AG04449 (cell line): ENCODE measurements at regions of chr2 and their contacts with region 1.

Region 1: GRCh38 chr2:222919841-222920526 is 59.1 kb downstream of the ACSL3 start:
- DNase-seq: peak; percentile 78
- H3K4me3 ChIP-seq: no peak overlapping the region
- CTCF ChIP-seq: no peak

Region 2: DNA sequence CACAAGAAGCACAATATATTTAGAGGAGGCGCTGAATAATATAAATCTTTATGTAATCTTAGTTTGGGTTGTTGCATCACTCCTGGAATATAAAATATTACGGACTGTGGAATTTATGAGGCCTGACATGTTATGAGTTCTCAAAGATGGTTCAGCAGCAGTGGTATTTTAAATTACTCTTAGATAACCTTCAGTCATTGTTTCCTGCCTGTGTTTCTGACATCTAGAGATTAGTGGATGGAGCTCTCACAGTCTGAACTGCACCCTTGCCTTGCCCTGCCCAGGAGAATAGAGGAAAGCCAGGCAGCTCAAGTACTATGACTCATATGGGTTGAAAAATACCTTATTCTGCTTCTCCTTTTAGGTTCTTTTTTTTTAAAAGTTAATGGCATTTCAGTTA is 10.9 kb after region 1 on chr2:
- CTCF ChIA-PET with region 1: interaction called, 19 read pairs
- POLR2A ChIA-PET with region 1: no interaction called
- DNase-seq: no peak
- H3K4me3 ChIP-seq: no peak overlapping the region
- CTCF ChIP-seq: no peak